Endothelial cell of umbilical vein (primary cell): ENCODE measurements at regions of chr12 and their contacts with region 1.

Region 1: DNA sequence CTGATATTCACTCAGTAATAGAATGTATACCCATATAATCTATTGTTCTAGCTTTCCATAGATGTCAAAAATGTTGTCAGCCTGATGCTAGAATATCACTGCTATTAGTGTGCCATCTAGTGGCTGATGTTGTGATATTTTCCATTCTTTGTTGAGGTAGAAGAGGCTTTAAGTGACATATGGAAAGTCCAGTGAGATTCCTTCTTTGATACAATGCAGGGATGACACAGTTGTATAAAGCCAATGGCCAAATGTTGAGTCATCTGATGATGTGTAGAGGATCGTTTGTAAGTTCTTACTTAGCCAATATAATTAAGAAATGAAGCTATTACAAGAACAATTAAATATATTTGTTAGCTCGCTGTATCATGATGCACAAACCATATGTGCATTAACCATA is 58.1 kb upstream of the PCED1B start:
- DNase-seq: peak; percentile 91
- H3K4me3 ChIP-seq: no peak overlapping the region
- H3K27ac ChIP-seq: no peak overlapping the region
- H3K4me1 ChIP-seq: peaks cover 20% of the 10 kb centered on the region
- H3K27me3 ChIP-seq: no peaks in the 10 kb centered on the region
- CTCF ChIP-seq: peak; percentile 32 to 38
- POLR2A ChIP-seq: no peak

Region 2: DNA sequence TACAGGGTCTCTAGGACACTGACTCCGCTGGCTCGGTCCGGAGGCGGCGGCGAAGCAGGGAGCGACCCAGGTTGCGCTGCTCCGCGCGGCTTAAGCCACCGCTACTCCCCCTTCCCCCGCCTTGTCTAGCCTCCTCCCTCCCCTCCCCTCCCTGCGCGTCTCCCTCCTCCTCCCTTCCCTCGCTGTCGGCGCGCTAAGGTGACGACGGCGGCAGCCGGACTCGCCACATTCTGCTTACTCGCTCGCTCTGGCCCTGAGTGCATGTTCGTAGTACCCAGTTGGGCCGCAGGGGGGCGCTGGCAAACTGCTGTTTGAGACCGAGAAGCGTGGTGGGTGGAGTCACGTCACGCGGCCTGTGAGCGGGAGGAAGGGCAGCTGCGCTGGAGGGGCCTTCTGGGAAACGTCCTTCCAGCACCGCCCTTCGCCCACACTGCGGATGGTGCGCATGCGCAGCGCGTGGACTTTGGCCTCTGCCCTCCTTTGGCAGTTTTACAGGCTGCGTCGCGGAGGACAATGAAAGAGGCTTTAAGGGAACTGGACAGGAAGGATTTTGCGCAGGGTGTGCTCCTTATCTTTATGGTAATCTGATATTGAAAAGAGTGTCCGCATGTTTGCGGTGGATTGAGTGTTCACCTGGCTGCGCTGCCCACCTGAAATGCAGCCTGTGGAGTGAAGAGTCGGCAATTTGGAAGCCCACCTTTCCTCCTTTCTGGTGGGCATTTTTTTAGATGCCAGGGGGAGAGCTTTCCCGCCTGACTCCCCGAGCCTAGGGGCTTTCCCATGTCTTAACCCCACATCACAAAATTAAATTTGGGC is 1030.6 kb before region 1 on chr12 and contains the start of gene SCAF11:
- CTCF ChIA-PET with region 1: interaction called, 5 read pairs
- POLR2A ChIA-PET with region 1: no interaction called
- dilution Hi-C with region 1: no loop called
- intact Hi-C with region 1: loop called (anchors 5 kb)
- DNase-seq: peak; percentile 100
- H3K4me3 ChIP-seq: peak within 1 kb of the TSS; percentile 56 to 91 (median 86)
- H3K27ac ChIP-seq: peak within 1 kb of the TSS; percentile 79
- H3K4me1 ChIP-seq: peaks cover 16% of the 10 kb centered on the region
- H3K27me3 ChIP-seq: no peaks in the 10 kb centered on the region
- CTCF ChIP-seq: peak; percentile 96 to 99
- POLR2A ChIP-seq: peak; percentile 16
- total RNA-seq, gene SCAF11: 95.0 and 109 TPM in 2 replicates

Region 3: GRCh38 chr12:46153268-46153872 is 867.9 kb before region 1 on chr12:
- CTCF ChIA-PET with region 1: interaction called, 8 read pairs
- POLR2A ChIA-PET with region 1: no interaction called
- dilution Hi-C with region 1: no loop called
- intact Hi-C with region 1: loop called (anchors 1 kb)
- DNase-seq: peak; percentile 37
- H3K4me3 ChIP-seq: no peak overlapping the region
- H3K27ac ChIP-seq: peak overlapping the region; percentile 28
- H3K4me1 ChIP-seq: peaks cover 23% of the 10 kb centered on the region
- H3K27me3 ChIP-seq: no peaks in the 10 kb centered on the region
- CTCF ChIP-seq: peak; percentile 38 to 40
- POLR2A ChIP-seq: no peak

Region 4: DNA sequence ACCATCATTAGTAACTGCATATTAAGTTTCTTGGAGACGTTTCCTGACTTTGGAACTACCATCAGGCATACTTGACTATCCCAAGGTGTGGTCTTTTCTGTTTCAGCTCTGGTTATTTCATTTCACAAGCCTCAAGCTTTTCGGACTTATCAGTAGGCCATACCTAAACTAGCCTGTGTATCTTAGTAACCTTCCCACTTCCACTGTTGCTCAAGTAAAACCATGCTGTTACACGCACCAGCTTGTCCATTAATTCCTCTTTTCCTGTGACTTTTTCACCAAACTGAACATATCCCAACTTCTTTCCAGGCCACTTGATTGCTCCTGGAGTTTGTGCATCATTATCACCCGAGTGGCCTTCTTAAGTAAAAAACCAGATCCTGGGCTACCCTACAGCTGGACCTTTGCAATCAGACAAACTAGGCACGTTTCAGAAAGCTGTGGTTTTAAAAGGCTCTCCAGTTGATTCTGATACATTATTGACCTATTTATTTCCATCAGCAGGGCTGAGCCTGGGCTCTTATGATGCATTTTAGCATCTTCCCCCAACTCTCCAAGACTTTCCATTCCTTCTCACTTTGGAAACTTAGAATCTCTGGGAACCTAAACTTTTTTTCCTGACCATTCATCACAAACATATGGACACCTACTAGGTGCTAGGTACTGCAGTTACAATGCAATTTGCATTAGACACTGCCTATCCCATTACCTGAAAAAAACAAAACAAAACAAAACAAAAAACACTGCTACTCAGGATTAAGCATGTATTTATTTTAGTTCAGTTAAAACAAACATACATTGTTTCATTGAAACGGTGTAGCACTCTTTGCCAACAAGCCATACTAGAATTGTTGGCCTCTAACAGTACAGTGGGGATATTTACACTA is 663.6 kb before region 1 on chr12:
- CTCF ChIA-PET with region 1: interaction called, 10 read pairs
- POLR2A ChIA-PET with region 1: no interaction called
- dilution Hi-C with region 1: no loop called
- intact Hi-C with region 1: no loop called
- DNase-seq: peak; percentile 81
- H3K4me3 ChIP-seq: no peak overlapping the region
- H3K27ac ChIP-seq: no peak overlapping the region
- H3K4me1 ChIP-seq: peaks cover 2% of the 10 kb centered on the region
- H3K27me3 ChIP-seq: no peaks in the 10 kb centered on the region
- CTCF ChIP-seq: no peak
- POLR2A ChIP-seq: peak; percentile 91

Region 5: DNA sequence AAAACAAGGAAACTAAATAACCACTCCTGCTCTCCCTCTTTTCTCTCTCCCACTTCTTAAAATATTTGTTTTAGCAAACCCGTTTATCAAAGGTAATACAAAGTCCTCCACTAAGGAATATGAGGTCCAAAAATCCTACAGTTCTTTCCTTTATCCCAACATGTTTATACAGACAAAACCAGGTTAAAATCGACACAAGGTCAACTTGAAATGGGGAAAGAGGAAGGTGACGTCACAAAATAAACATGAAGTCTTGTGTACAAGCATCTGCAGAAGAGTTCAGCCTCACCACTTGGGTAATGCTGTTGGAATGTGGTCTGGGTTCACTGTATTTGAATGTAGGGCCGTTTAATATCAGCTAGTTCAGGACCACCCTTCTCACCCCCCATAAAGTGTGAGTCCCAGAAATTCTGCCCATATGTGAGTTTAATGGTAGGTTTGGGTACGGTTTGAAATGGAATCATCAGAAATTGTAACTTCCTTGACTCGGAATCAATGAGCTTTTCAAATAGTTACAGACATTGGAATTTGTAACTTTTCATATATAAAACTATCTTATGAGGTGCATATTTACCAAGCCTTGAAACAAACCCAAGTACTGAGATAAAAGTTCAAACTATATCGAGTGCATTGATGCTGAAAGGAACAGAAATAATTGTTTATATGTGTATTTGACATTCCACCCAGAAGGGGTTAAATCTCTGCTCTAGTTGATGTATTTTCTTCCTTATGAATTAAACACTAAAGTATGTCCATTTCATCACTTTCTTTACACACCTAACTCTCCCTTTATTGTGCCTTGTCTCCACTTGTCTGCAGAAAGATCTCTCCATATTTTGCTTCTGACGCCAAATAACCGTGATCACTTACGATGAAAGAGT is 528.6 kb before region 1 on chr12:
- CTCF ChIA-PET with region 1: no interaction called
- POLR2A ChIA-PET with region 1: no interaction called
- dilution Hi-C with region 1: no loop called
- intact Hi-C with region 1: loop called (anchors 5 kb)
- DNase-seq: peak; percentile 93
- H3K4me3 ChIP-seq: no peak overlapping the region
- H3K27ac ChIP-seq: peak overlapping the region; percentile 97
- H3K4me1 ChIP-seq: peaks cover 43% of the 10 kb centered on the region
- H3K27me3 ChIP-seq: no peaks in the 10 kb centered on the region
- CTCF ChIP-seq: no peak
- POLR2A ChIP-seq: peak; percentile 63

Region 6: GRCh38 chr12:46682148-46682547 is 339.1 kb before region 1 on chr12:
- CTCF ChIA-PET with region 1: interaction called, 37 read pairs
- POLR2A ChIA-PET with region 1: no interaction called
- dilution Hi-C with region 1: no loop called
- intact Hi-C with region 1: loop called (anchors 1 kb)
- DNase-seq: no peak
- H3K4me3 ChIP-seq: no peak overlapping the region
- H3K27ac ChIP-seq: no peak overlapping the region
- H3K4me1 ChIP-seq: no peaks in the 10 kb centered on the region
- H3K27me3 ChIP-seq: no peaks in the 10 kb centered on the region
- CTCF ChIP-seq: no peak
- POLR2A ChIP-seq: no peak

Region 7: GRCh38 chr12:46983393-46984266 is 37.7 kb before region 1 on chr12:
- CTCF ChIA-PET with region 1: interaction called, 43 read pairs
- POLR2A ChIA-PET with region 1: no interaction called
- dilution Hi-C with region 1: no loop called
- intact Hi-C with region 1: loop called (anchors 1 kb)
- DNase-seq: peak; percentile 71
- H3K4me3 ChIP-seq: no peak overlapping the region
- H3K27ac ChIP-seq: no peak overlapping the region
- H3K4me1 ChIP-seq: no peaks in the 10 kb centered on the region
- H3K27me3 ChIP-seq: peaks cover 0 to 8% of the 10 kb centered on the region in 2 experiments
- CTCF ChIP-seq: peak; percentile 75 to 76
- POLR2A ChIP-seq: no peak